ENCODE measurements at regions of chr4 and their contacts with region 1.

Region 1: GRCh38 chr4:166091912-166092510 is 219.0 kb downstream of the TLL1 start:
- DNase-seq: peak in 2 of 4 donors; percentile 28 to 41
- ATAC-seq: peak; percentile 65
- H3K4me3 ChIP-seq: no peak overlapping the region
- H3K27ac ChIP-seq: no peak overlapping the region
- H3K4me1 ChIP-seq: no peaks in the 10 kb centered on the region
- H3K27me3 ChIP-seq: no peaks in the 10 kb centered on the region
- CTCF ChIP-seq: peak; percentile 46 to 50

Region 2: GRCh38 chr4:165537028-165537648 is 554.9 kb before region 1 on chr4:
- intact Hi-C with region 1: loop called (anchors 5 to 10 kb)
- DNase-seq: peak in 2 of 4 donors; percentile 46 to 63
- ATAC-seq: peak; percentile 83
- H3K4me3 ChIP-seq: no peak overlapping the region
- H3K27ac ChIP-seq: no peak overlapping the region
- H3K4me1 ChIP-seq: no peaks in the 10 kb centered on the region
- H3K27me3 ChIP-seq: no peaks in the 10 kb centered on the region
- CTCF ChIP-seq: peak; percentile 53 to 78

Region 3: DNA sequence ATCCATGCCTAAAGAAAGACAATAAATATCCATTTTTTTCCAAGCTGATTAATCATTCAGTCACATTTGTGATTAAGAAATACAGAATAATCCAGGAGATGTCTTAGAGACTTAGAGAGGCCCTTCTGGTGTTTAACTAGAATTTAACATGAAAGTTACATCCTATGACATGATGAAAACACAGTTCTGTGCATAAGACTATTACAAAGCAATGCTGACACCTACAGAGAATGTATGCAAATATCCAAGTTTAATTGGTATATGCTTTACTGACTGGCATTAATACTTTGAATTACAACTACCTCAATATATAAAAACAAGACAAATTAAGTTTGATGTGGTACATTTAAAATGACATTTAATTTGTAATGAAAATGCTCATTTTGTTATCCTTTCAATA is 236.8 kb before region 1 on chr4:
- intact Hi-C with region 1: loop called in 1 of 2 experiments (anchors 5 kb)
- DNase-seq: no peak
- ATAC-seq: no peak
- H3K4me3 ChIP-seq: no peak overlapping the region
- H3K27ac ChIP-seq: no peak overlapping the region
- H3K4me1 ChIP-seq: no peaks in the 10 kb centered on the region
- H3K27me3 ChIP-seq: no peaks in the 10 kb centered on the region
- CTCF ChIP-seq: no peak

Region 4: GRCh38 chr4:166293556-166293955 is 201.5 kb after region 1 on chr4:
- intact Hi-C with region 1: no loop called
- DNase-seq: no peak
- ATAC-seq: no peak
- H3K4me3 ChIP-seq: no peak overlapping the region
- H3K27ac ChIP-seq: no peak overlapping the region
- H3K4me1 ChIP-seq: no peaks in the 10 kb centered on the region
- H3K27me3 ChIP-seq: no peaks in the 10 kb centered on the region
- CTCF ChIP-seq: no peak

Region 5: GRCh38 chr4:166318810-166319525 is 227.0 kb after region 1 on chr4:
- intact Hi-C with region 1: no loop called
- DNase-seq: no peak
- ATAC-seq: no peak
- H3K4me3 ChIP-seq: no peak overlapping the region
- H3K27ac ChIP-seq: no peak overlapping the region
- H3K4me1 ChIP-seq: no peaks in the 10 kb centered on the region
- H3K27me3 ChIP-seq: no peaks in the 10 kb centered on the region
- CTCF ChIP-seq: no peak

Measured in left lung (tissue), 14 donors.